ENCODE measurements at regions of chr3 and their contacts with region 1.

Region 1: GRCh38 chr3:180594631-180595558 is 7.1 kb upstream of the TTC14 start:
- DNase-seq: peak; percentile 40
- CTCF ChIP-seq: peak; percentile 21

Region 2: DNA sequence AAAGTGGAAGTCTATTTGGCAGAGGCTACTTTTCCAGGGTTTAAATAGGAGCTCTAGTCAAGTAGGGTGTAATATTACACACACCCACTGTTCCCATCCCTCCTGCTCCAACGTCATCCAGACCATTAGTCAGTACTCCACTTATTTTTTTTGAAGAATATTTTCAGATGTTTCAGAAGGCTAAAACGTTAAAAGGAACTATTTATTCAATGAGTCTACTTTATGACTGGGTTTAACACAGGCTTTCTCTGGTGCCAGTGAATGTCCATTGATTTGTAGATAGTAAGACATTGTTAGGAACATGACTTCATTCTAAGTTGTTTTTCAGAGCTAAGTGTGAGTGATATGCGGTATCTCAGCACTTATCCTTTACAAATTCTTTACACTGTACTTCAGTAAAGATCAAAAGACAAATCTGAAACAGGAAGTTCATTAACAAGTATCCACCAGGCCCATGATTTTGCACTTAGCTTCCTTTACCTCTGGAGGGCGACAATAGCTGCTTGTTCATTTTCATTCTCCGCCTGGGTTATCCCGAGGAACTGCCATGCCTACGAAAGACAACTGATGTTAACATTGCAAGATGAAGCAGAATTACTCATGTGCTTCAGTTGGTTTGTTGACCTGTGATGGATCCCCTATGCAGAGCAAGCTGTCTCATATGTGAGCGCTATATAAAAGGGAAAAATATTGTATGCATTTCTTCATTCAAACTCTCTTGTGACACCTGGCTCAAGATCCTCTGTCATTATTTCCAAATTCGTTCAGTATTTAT is 783.4 kb before region 1 on chr3:
- in situ Hi-C with region 1: loop called (anchors 25 kb)
- DNase-seq: peak; percentile 63
- CTCF ChIP-seq: peak; percentile 41

Region 3: DNA sequence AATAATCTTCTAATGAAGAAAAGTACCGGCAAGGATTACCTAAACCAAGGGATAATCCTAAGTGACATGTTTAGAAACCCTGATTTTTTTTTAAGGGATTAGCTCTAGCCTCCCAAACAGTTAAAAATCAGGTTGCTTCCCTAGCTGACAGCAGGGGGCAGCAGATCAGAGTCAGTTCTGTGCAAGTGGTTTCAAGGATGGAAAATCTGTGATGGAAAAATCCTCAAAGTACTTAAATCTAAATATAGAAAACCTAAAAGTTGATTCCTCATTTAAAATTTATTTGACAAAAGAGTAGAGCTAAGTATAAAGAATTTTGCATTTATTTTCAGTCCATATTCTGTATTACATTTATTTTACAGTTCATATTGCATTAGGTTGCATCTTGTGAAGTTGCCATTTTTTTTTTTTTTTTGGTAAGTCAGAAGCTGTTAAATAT is 665.8 kb before region 1 on chr3:
- in situ Hi-C with region 1: loop called (anchors 10 kb)
- DNase-seq: peak; percentile 34
- CTCF ChIP-seq: peak; percentile 71